ENCODE measurements at regions of chr20 and their contacts with region 1.

Region 1: DNA sequence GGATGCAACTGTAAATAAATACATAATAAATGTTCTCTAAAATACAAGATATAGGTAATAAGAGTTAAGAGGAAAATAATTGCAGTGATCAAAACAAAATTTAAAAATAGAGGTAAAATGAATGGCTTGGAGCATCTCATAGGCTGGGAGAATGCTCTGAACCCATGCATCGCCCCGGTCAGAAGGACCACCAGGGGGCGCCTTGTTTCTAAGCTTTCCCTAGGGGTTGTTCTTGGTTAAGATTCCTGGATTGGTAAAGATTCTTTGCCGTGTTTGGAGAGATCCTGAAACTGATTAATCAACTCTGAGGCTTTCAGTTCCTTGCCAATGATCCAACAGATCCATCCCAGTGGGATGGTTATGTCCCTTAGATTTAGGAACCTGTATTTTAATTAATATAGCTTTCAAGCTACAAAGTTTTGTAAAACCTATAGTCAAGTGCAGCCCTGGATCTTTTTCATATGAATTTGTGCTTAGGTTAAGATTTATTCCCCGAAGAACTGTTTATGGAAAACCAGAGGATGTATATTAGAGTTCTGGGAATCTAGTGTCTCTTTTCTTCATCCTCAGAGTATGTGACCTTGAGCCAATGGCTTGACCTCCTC is 45.3 kb upstream of the PRELID3B start:
- DNase-seq: peak; percentile 72 to 89 (median 84)
- H3K4me3 ChIP-seq: no peak overlapping the region
- H3K27ac ChIP-seq: no peak overlapping the region
- H3K27me3 ChIP-seq: peaks cover 0 to 5% (median 0%) of the 10 kb centered on the region in 45 donors
- CTCF ChIP-seq: peak; percentile 81 to 100 (median 96)

Region 2: GRCh38 chr20:59149651-59150504 is 61.9 kb after region 1 on chr20:
- intact Hi-C with region 1: loop called in 1 of 2 experiments (anchors 5 kb)
- DNase-seq: no peak
- H3K4me3 ChIP-seq: no peak overlapping the region
- H3K27ac ChIP-seq: peak overlapping the region in 2 of 59 donors; percentile 4 to 8
- H3K27me3 ChIP-seq: no peaks in the 10 kb centered on the region
- CTCF ChIP-seq: no peak

Region 3: GRCh38 chr20:59207742-59208357 is 119.9 kb after region 1 on chr20:
- intact Hi-C with region 1: loop called (anchors 2 to 5 kb)
- DNase-seq: peak in 8 of 10 donors; percentile 52 to 75 (median 68)
- H3K4me3 ChIP-seq: no peak overlapping the region
- H3K27ac ChIP-seq: no peak overlapping the region
- H3K27me3 ChIP-seq: no peaks in the 10 kb centered on the region
- CTCF ChIP-seq: peak in 55 of 56 donors; percentile 41 to 84 (median 68)

Region 4: GRCh38 chr20:59222253-59223181 is 134.6 kb after region 1 on chr20:
- intact Hi-C with region 1: loop called (anchors 5 kb)
- DNase-seq: peak; percentile 61 to 87 (median 74)
- H3K4me3 ChIP-seq: peak overlapping the region; percentile 21 to 83 (median 64)
- H3K27ac ChIP-seq: peak overlapping the region in 42 of 59 donors; percentile 4 to 81 (median 52)
- H3K27me3 ChIP-seq: no peaks in the 10 kb centered on the region
- CTCF ChIP-seq: peak; percentile 71 to 98 (median 93)

Region 5: DNA sequence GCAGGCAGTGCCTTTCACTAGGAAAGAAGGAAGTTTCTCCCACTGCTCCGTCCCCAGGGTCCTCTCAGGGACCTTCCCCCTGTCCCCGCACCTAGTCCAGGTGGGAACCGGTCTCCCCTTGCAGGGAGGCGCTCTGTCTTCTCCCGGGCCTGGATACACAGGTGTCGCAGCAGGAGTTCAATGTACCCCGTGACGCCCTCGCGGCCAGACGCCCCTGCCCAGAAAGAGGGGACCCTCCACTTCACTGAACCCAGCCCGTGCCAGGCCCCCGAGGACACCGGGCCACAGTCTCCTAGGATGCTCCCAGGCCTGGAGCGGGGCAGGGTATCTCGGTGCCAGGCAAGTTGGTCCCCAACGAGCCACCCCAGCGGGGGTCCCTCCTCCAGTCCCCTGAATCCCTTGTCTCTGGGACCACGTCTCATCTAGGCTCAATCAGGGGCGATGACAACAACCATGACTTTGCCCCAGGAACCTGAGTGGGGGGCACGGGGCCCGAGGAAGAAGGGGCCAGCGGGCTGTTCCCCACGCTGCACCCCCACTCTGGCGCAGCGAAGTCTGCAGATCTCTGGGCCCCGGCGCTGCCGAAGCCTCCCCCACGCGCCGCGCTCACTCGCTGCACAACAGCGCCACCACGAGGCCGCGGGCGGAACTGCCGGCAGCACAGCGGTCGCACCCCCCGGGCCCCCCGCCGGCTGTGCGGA is 315.5 kb after region 1 on chr20:
- intact Hi-C with region 1: loop called (anchors 5 to 10 kb)
- DNase-seq: peak in 9 of 10 donors; percentile 24 to 79 (median 58)
- H3K4me3 ChIP-seq: peak overlapping the region in 57 of 59 donors; percentile 1 to 59 (median 42)
- H3K27ac ChIP-seq: peak overlapping the region in 31 of 59 donors; percentile 1 to 74 (median 32)
- H3K27me3 ChIP-seq: peaks cover 0 to 93% (median 45%) of the 10 kb centered on the region in 45 donors
- CTCF ChIP-seq: peak; percentile 82 to 100 (median 98)

Measured in dorsolateral prefrontal cortex (tissue), 120 donors.